Common myeloid progenitor, CD34-positive (primary cell): ENCODE measurements at regions of chr9 and their contacts with region 1.

Region 1: GRCh38 chr9:98998441-98999151 is 54.9 kb downstream of the COL15A1 start:
- DNase-seq: peak; percentile 32 to 44 (median 39)
- H3K4me3 ChIP-seq: no peak overlapping the region
- H3K27ac ChIP-seq: no peak overlapping the region
- H3K4me1 ChIP-seq: peaks cover 0 to 32% (median 20%) of the 10 kb centered on the region in 4 experiments
- H3K27me3 ChIP-seq: no peaks in the 10 kb centered on the region

Region 2: GRCh38 chr9:98848450-98849149 is 150.0 kb before region 1 on chr9:
- CTCF ChIA-PET with region 1: interaction called, 98 read pairs
- POLR2A ChIA-PET with region 1: interaction called, 3 read pairs
- DNase-seq: peak; percentile 80 to 86 (median 81)
- H3K4me3 ChIP-seq: no peak overlapping the region
- H3K27ac ChIP-seq: no peak overlapping the region
- H3K4me1 ChIP-seq: peaks cover 0 to 6% (median 0%) of the 10 kb centered on the region in 4 experiments
- H3K27me3 ChIP-seq: no peaks in the 10 kb centered on the region

Region 3: GRCh38 chr9:98974994-98975712 is 23.4 kb before region 1 on chr9:
- CTCF ChIA-PET with region 1: interaction called, 44 read pairs
- POLR2A ChIA-PET with region 1: no interaction called
- DNase-seq: peak; percentile 66 to 78 (median 71)
- H3K4me3 ChIP-seq: peak overlapping the region in 2 of 7 experiments; percentile 43 to 62
- H3K27ac ChIP-seq: no peak overlapping the region
- H3K4me1 ChIP-seq: peaks cover 0 to 9% (median 5%) of the 10 kb centered on the region in 4 experiments
- H3K27me3 ChIP-seq: peaks cover 0 to 14% (median 0%) of the 10 kb centered on the region in 5 experiments

Region 4: GRCh38 chr9:99057665-99058625 is 59.3 kb after region 1 on chr9:
- CTCF ChIA-PET with region 1: interaction called, 10 read pairs
- POLR2A ChIA-PET with region 1: no interaction called
- DNase-seq: peak; percentile 83 to 95 (median 92)
- H3K4me3 ChIP-seq: peak overlapping the region in 5 of 7 experiments; percentile 6 to 54 (median 40)
- H3K27ac ChIP-seq: no peak overlapping the region
- H3K4me1 ChIP-seq: peaks cover 41 to 78% (median 50%) of the 10 kb centered on the region in 4 experiments
- H3K27me3 ChIP-seq: no peaks in the 10 kb centered on the region

Region 5: GRCh38 chr9:99140685-99141314 is 142.2 kb after region 1 on chr9:
- CTCF ChIA-PET with region 1: interaction called, 313 read pairs
- POLR2A ChIA-PET with region 1: interaction called, 3 read pairs
- DNase-seq: peak; percentile 68 to 85 (median 79)
- H3K4me3 ChIP-seq: no peak overlapping the region
- H3K27ac ChIP-seq: no peak overlapping the region
- H3K4me1 ChIP-seq: peaks cover 16 to 37% (median 27%) of the 10 kb centered on the region in 4 experiments
- H3K27me3 ChIP-seq: no peaks in the 10 kb centered on the region